ENCODE measurements at regions of chr16 and their contacts with region 1.

Region 1: DNA sequence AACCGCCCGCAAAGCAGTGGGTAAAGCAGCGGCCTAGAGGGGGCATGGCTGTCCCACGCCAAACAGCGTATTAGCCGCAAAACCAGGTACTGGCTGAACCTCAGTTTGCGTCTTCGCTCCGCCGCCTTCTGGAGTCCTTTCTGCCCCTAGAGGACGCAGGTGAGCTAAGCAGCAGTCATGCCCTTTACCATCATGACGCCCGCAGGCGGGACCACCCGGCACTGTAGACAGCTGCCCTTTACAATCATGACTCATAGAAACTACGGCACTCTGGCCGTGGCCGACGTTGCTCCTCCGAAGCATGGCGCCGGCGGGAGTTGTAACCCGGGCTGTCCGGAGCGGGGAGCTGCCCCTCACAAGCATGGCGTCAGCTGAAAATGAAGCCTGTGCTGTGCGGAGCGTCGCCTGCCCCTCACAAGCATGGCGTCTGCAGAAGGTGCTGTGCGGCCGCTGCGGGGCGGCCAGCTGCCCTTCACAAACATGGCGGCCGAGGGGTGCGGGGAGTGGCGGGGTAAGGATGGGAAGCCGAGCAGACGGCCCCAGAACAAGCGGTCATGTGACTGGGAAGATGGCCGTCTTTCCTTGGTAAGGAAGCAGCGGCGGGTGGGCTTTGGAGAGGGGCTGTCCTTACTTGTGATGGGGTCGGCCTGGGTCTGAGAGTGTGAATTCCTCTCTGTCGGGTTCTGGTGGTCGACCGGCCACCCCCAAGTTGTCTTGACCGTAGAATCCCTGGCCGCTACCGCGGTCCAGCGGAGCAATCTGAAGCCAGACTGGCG is at the start of gene VPS35L:
- DNase-seq: peak; percentile 100
- H3K4me3 ChIP-seq: peak within 1 kb of the TSS; percentile 67 to 77 (median 68)
- H3K27ac ChIP-seq: peak within 1 kb of the TSS; percentile 85
- H3K4me1 ChIP-seq: peaks cover 6% of the 10 kb centered on the region
- H3K27me3 ChIP-seq: no peaks in the 10 kb centered on the region
- CTCF ChIP-seq: peak; percentile 60 to 88
- POLR2A ChIP-seq: peak; percentile 90
- total RNA-seq, gene VPS35L: 80.2 and 91.1 TPM in 2 replicates

Region 2: DNA sequence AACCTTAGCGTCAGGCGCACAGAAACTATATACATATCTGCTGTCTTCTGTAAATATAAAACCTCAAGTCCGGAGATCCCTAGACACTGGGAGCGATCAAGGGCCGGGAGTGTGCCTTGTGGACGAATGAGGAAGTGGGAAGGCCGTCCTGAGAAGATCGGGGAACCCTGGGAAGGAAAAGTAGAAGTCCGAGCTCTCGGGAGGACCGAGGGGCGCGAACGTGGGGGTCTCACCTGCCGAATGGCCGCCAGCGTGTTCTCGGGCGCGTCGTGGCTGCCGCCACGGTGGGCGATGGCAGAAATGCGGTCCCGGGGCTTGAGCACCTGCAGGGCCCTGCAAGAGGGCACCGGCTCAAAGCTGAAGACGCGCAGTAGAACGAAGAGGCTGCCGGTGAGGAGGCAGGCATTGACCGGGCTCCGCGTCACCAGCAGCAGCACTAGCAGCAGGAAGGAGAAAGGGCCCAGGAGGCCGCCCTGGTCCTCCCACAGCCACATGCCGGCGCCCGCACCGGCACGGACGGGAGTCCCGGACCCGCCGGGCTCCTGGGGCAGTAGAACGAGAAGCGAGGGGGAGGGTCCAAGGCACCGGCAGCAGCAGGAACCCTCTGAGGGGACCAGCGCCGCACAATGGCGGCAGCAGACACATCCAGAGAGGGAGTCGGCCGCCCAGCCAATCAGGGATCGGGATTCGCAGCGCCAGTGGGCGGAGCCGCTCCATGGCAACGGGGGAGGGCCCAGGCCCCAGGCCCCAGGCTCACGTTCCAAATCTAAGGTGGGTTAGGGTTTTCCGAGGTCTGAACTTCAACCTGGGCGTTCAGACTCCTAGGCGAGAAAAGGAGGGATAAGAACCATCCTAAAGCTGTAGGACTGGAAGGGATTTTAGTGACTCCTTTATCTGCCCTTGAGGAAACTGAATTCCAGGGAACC is 33.6 kb before region 1 on chr16 and contains the start of gene GDE1:
- CTCF ChIA-PET with region 1: interaction called, 28 read pairs
- POLR2A ChIA-PET with region 1: interaction called, 3 read pairs
- dilution Hi-C with region 1: no loop called
- intact Hi-C with region 1: loop called (anchors 2 kb)
- DNase-seq: peak; percentile 92
- H3K4me3 ChIP-seq: peak within 1 kb of the TSS; percentile 88 to 93 (median 89)
- H3K27ac ChIP-seq: peak within 1 kb of the TSS; percentile 50
- H3K4me1 ChIP-seq: peaks cover 21% of the 10 kb centered on the region
- H3K27me3 ChIP-seq: no peaks in the 10 kb centered on the region
- CTCF ChIP-seq: peak in 1 of 2 donors; percentile 64
- POLR2A ChIP-seq: peak; percentile 80
- total RNA-seq, gene GDE1: 50.5 and 51.5 TPM in 2 replicates

Region 3: DNA sequence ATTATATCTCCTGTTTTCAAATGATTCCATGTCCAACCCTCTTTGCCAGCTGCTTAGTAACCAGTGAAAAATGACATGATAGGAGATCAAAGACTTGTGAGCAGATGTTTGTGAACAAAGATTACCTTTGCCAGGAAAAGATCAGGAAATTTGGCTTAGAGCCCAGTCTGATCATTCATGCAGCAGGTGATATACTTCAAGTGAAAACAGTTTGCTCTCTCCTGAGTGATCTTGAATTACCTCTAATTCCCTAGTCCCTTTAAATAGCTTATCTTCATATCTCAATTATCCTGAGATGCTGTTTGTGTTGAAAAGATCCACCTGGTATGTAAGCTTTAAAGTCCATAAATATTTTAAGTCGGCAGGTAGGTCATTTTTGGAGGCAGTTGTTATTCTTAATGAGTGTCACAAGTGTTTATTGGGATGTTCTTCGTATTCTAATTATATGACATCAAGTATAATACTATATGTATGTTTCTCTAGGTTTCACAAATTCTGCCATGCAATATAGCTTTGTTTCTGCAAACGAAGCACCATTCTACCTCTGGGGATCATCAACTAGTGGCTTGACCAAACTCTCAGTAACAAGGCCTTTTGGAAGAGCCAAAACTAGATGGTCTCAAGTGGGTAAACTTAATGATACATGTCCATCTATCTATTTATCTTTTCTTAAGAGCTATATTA is 13.1 kb before region 1 on chr16:
- CTCF ChIA-PET with region 1: interaction called, 33 read pairs
- POLR2A ChIA-PET with region 1: no interaction called
- dilution Hi-C with region 1: no loop called
- intact Hi-C with region 1: no loop called
- DNase-seq: no peak
- H3K4me3 ChIP-seq: no peak overlapping the region
- H3K27ac ChIP-seq: no peak overlapping the region
- H3K4me1 ChIP-seq: no peaks in the 10 kb centered on the region
- H3K27me3 ChIP-seq: no peaks in the 10 kb centered on the region
- CTCF ChIP-seq: no peak
- POLR2A ChIP-seq: no peak

Region 4: GRCh38 chr16:19583665-19584300 is 28.4 kb after region 1 on chr16:
- CTCF ChIA-PET with region 1: interaction called, 20 read pairs
- POLR2A ChIA-PET with region 1: no interaction called
- dilution Hi-C with region 1: no loop called
- intact Hi-C with region 1: no loop called
- DNase-seq: peak; percentile 60
- H3K4me3 ChIP-seq: no peak overlapping the region
- H3K27ac ChIP-seq: no peak overlapping the region
- H3K4me1 ChIP-seq: no peaks in the 10 kb centered on the region
- H3K27me3 ChIP-seq: no peaks in the 10 kb centered on the region
- CTCF ChIP-seq: peak; percentile 80 to 81
- POLR2A ChIP-seq: no peak

Region 5: DNA sequence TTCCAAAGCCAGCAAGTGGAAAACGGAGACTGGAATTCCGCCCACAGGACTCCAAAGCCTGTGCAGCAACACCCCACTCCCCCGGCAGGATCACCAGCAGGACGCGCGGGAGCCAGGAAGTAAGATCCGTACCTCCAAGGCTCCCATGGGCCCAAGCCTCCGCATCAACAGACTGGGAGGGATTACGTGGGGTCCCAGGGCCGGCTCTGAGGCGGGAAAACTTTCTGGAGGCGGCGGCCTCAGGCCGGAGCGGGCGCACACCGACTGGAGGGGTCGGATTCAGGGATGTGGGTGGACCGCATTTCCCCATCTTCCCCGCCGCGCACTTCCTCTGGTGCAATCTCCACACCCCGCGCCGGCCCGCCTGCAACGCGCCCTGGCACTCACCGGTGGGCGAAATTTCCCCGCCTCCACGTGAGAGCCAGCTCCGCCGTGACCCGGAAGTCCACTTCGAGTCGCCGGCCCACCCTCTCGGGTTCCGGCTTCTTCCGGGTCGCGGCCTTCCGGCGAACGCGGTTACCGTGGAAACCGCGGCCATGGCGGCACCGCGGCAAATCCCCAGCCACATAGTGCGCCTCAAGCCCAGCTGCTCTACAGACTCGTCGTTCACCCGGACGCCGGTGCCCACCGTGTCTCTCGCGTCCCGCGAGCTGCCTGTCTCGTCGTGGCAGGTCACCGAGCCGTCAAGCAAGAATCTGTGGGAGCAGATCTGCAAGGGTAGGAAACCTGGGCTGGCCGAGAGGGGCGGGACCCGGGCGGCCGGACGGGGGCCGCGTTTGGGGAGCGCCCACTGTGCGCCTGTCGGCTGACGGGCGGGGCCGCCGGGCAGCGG is 162.6 kb after region 1 on chr16 and contains the starts of genes IQCK and KNOP1:
- CTCF ChIA-PET with region 1: no interaction called
- POLR2A ChIA-PET with region 1: no interaction called
- dilution Hi-C with region 1: no loop called
- intact Hi-C with region 1: loop called (anchors 5 kb)
- DNase-seq: peak; percentile 89
- H3K4me3 ChIP-seq: peak within 1 kb of the TSS; percentile 68 to 100 (median 99)
- H3K27ac ChIP-seq: peak within 1 kb of the TSS; percentile 81
- H3K4me1 ChIP-seq: peaks cover 13% of the 10 kb centered on the region
- H3K27me3 ChIP-seq: no peaks in the 10 kb centered on the region
- CTCF ChIP-seq: peak in 1 of 2 donors; percentile 15
- POLR2A ChIP-seq: peak; percentile 32
- total RNA-seq, gene IQCK: 13.2 and 17.2 TPM in 2 replicates
- total RNA-seq, gene KNOP1: 33.5 and 43.2 TPM in 2 replicates